Heart right ventricle (tissue), 16 donors: ENCODE measurements at regions of chr16 and their contacts with region 1.

Region 1: DNA sequence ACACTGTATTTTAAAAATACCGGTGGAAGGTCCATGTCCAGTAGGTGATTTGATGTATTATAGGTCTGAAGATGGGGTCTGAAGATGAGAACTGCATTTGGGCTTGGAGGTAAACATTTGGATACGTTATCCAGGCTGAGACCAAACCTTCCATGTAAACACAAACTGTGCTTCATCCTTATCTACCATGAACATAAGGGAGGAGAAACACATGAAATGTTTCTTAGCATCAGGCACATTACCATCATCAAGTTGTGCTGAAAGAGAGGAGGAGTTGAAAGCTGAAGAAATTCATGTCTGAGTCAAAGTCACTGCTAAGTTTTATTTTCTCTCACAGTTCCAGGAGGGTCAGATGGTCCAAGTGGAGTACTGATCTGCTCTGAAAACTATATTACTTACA is 11.4 kb downstream of the SF3B3 start:
- DNase-seq: no peak
- ATAC-seq: no peak
- H3K4me3 ChIP-seq: no peak overlapping the region
- H3K27ac ChIP-seq: no peak overlapping the region
- H3K4me1 ChIP-seq: peaks cover 0 to 4% (median 0%) of the 10 kb centered on the region in 9 donors
- H3K27me3 ChIP-seq: no peaks in the 10 kb centered on the region
- CTCF ChIP-seq: no peak

Region 2: DNA sequence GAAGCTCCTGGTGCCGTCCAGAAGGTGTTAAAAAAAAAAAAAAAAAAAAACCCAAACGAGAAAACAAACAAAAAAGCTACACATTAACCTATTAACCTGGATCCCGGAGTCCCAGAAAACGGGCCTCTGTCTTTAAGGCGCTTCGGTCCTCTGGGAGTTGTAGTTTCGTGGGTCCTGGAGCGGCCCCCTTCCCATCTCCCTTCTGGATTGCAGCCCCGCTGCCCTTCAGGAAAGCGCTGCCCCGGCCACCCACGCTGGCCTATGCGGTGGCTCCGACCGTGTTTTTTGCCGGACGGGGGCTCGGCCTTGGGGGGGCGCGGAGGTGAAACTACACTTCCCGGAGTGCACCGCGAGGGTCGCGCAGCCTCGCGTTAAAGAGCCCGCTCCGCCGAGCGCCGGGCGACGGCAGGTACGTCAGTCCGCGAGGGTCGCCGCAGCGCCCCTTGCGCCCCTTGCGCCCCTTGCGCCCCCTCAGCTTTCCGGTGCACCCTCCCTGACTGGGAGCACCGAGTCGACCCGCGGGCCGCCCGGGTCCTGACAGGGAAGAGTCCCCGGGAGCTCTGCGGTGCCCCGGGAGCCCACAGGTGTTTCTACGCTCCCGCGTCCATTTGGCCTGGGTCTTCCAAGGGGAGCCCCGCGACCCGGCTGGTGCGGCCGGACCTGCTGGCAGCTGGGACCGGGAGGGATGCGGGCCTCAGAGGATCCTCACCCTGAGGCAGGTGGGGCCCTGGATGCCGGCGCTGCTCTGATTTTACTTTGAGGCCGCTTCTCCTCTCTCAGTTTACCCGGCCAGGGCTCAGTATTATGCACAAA is 80.5 kb before region 1 on chr16 and contains the start of gene FCSK:
- intact Hi-C with region 1: no loop called
- DNase-seq: peak; percentile 56 to 73
- ATAC-seq: peak; percentile 90 to 94 (median 93)
- H3K4me3 ChIP-seq: peak within 1 kb of the TSS; percentile 84 to 100 (median 93)
- H3K27ac ChIP-seq: peak within 1 kb of the TSS; percentile 85 to 100 (median 96)
- H3K4me1 ChIP-seq: peaks cover 0 to 22% (median 17%) of the 10 kb centered on the region in 9 donors
- H3K27me3 ChIP-seq: peaks cover 0 to 12% (median 0%) of the 10 kb centered on the region in 7 donors
- CTCF ChIP-seq: peak in 1 of 9 donors; percentile 18
- total RNA-seq, gene FCSK: 6.5 to 12.6 (median 9.0) TPM

Region 3: GRCh38 chr16:70576431-70577255 is 41.7 kb after region 1 on chr16:
- intact Hi-C with region 1: loop called in 2 of 10 experiments (anchors 5 kb)
- DNase-seq: no peak
- ATAC-seq: peak in 1 of 8 donors; percentile 16
- H3K4me3 ChIP-seq: no peak overlapping the region
- H3K27ac ChIP-seq: peak overlapping the region in 2 of 10 donors; percentile 34 to 40
- H3K4me1 ChIP-seq: peaks cover 6 to 70% (median 55%) of the 10 kb centered on the region in 9 donors
- H3K27me3 ChIP-seq: no peaks in the 10 kb centered on the region
- CTCF ChIP-seq: no peak

Region 4: DNA sequence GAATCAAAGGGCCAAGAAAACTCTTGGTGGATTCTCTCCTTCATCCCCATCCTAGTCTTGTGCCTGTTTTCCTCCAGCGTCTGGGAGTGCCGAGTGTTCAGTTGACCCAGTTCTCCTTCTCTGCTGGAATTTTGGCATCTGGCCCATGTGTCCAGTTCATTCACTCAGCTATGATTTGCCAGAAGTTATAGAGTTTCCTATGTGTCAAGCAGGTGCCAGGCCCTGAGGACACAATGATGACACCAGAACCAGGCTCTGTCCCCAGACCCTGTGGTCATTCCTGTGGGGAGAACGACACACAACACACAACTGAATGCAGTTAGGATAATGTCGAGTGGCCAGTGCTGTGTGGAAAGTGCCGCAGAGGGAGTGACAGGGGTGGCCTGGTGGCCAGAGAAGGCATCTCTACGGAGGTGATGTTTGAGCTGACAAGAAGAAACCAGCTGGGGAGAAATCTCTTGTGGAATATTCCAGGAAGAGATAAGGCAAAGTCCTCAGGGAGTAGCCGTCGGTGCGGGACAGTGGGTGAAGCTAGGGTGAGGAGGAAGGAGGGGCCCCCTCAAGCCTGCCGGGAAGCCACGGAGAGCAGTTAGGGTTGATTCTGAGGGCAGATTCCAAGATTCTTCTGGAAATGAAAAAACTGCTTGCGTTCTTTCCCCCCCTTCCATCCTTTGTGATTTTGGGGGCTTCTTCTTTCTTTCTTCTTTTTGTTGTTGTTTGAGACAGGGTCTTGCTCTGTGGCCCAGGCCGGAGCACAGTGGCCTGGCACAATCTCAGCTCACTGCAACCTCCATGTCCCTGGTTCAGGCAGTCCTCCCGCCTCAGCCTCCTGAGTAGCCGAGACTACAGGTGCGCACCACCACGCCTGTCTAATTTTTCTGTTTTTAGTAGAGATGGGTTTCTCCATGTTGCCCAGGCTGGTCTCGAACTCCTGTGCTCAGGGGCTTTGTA is 75.6 kb after region 1 on chr16:
- intact Hi-C with region 1: no loop called
- DNase-seq: peak; percentile 31 to 57
- ATAC-seq: peak in 6 of 8 donors; percentile 42 to 73 (median 58)
- H3K4me3 ChIP-seq: no peak overlapping the region
- H3K27ac ChIP-seq: no peak overlapping the region
- H3K4me1 ChIP-seq: peaks cover 0 to 14% (median 6%) of the 10 kb centered on the region in 9 donors
- H3K27me3 ChIP-seq: no peaks in the 10 kb centered on the region
- CTCF ChIP-seq: no peak

Region 5: DNA sequence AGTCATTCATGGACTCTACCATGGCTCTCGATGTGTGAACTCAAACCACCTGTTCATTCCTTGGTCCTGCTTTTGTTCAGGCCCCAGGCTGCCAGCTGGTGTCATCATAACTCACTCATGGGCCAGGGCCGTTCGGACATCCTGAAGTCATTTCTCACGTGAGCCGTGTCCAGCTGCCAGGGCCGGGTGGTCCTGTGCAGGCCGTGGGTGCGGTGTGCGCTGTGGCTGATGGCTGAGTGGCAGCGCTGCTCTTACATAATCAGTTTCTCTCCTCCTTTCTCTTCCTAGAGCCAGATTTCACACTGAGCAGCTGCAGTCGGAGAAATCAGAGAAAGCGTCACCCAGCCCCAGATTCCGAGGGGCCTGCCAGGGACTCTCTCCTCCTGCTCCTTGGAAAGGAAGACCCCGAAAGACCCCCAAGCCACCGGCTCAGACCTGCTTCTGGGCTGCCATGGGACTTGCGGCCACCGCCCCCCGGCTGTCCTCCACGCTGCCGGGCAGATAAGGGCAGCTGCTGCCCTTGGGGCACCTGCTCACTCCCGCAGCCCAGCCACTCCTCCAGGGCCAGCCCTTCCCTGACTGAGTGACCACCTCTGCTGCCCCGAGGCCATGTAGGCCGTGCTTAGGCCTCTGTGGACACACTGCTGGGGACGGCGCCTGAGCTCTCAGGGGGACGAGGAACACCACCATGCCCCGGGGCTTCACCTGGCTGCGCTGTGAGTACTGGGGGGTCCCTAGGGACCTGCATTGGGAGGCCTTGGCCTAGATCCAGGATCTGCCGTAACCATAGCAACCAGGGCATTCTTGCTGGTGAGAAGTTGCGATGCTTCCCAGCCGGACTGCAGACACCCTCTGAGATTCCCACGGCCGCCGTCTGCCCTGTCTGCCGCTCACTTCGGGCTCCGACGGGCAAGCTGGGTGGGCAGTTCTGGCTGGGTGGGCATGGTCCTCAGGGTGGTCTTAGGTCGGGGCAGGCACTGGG is 111.6 kb after region 1 on chr16 and contains the start of gene IL34:
- intact Hi-C with region 1: loop called in 4 of 10 experiments (anchors 5 to 10 kb)
- DNase-seq: no peak
- ATAC-seq: peak; percentile 32 to 73 (median 62)
- H3K4me3 ChIP-seq: peak within 1 kb of the TSS in 6 of 10 donors; percentile 5 to 33 (median 26)
- H3K27ac ChIP-seq: peak within 1 kb of the TSS in 7 of 10 donors; percentile 9 to 63 (median 40)
- H3K4me1 ChIP-seq: peaks cover 0 to 18% (median 4%) of the 10 kb centered on the region in 9 donors
- H3K27me3 ChIP-seq: no peaks in the 10 kb centered on the region
- CTCF ChIP-seq: no peak
- total RNA-seq, gene IL34: 0.37 to 4.4 (median 2.1) TPM